OCI-LY7 (cell line): ENCODE measurements at regions of chr19 and their contacts with region 1.

Region 1: DNA sequence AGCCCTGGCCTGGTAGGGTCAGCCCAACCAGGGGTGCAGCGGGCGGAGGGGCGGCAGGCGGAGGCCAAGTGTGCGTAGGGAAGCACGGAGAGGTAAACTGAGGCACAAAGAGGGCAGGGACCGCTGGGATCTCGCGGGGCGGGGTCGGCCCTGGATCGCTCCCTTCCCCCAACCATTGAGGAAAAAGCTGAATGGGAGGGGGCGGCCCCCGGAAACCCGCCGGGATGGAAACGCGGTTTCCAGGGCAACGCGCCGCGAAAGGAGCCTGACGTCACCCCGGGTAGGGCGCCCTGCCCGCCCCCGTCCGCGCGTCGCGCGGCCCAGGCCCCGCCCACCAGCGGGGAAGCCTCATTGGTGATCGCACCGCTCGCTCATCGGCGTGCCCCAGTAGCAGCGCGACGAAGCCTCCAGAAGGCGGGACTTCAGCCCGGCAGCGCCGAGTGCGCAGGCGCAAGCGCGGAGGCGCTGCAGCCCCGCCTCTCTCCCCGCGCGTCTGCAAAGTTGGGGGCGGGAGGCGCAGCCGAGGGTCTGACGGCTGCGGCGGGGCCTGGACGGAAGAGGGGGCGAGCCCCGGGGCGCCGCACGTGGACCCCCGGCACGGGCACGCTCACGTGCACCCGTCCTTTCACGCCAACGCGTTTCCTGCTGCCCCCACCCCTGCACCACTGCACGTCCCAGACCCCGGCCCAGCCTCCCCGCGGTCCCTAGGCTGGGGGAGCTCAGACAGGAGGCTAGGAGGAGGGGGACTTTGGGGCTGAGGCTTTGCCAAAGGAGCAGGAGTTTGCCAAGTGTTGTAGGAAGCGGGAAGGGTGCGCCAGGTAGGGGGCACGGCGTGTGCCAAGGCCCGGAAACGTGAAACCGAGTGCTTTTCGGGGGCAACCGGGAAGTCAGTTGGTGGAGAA is 8.2 kb upstream of the CIRBP start:
- DNase-seq: peak; percentile 99
- H3K4me3 ChIP-seq: peak overlapping the region; percentile 78
- H3K27ac ChIP-seq: peak overlapping the region; percentile 93
- H3K4me1 ChIP-seq: peaks cover 69% of the 10 kb centered on the region
- CTCF ChIP-seq: no peak

Region 2: GRCh38 chr19:1249298-1249989 is 11.4 kb before region 1 on chr19:
- CTCF ChIA-PET with region 1: interaction called, 24 read pairs
- POLR2A ChIA-PET with region 1: no interaction called
- intact Hi-C with region 1: loop called (anchors 1 kb)
- DNase-seq: peak; percentile 96
- H3K4me3 ChIP-seq: peak overlapping the region; percentile 97
- H3K27ac ChIP-seq: peak overlapping the region; percentile 87
- H3K4me1 ChIP-seq: peaks cover 46% of the 10 kb centered on the region
- CTCF ChIP-seq: no peak

Region 3: DNA sequence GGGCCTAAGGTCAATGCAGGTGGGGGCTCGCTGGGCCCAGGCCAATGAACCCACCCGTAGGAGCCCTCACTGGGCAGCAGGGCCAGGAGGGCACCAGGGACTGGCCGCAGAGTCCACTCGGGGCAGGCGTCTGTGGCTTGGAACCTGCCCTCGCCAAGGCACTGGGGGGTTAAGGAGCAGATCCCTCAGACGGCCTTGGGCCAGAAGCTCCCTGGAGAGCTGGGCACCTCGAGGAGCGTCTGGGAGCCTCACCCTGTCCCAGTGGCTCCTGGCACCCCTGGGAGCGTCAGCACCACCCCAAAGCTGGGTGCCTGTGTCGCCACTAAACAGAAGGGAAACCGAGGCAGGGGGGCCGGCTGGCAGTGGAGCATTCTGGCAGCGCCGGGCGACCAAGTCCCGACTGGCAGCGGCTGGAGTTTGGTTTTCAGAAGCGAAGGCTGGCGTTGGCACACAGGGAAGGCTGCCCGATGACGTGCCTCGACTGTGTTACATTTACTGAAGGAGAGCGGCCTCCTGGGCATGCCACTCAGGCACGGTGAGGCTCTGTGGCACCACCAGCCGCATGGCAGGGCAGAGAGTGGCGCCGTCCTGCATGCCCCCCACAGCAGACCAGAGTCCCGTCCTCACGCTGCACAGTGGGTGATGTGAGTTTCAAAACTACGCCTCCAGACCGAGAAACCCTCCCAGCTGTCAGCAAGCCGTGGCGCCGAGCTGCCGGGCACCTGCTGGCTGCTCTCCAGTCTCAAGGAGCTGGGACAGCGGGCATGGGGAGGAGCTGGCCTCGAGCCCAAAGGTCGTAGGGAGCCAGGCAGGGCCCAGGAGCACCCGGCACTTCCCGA is 316.4 kb after region 1 on chr19:
- CTCF ChIA-PET with region 1: no interaction called
- POLR2A ChIA-PET with region 1: no interaction called
- intact Hi-C with region 1: no loop called
- DNase-seq: no peak
- H3K4me3 ChIP-seq: no peak overlapping the region
- H3K27ac ChIP-seq: no peak overlapping the region
- H3K4me1 ChIP-seq: no peaks in the 10 kb centered on the region
- CTCF ChIP-seq: no peak